ENCODE measurements at regions of chr22 and their contacts with region 1.

Region 1: GRCh38 chr22:38317122-38317994 is at the start of gene CSNK1E:
- DNase-seq: peak; percentile 93
- ATAC-seq: peak; percentile 71
- total RNA-seq, gene CSNK1E: 55.4 TPM

Region 2: GRCh38 chr22:38030311-38031133 is 286.8 kb before region 1 on chr22:
- intact Hi-C with region 1: no loop called
- DNase-seq: peak; percentile 46
- ATAC-seq: no peak

Region 3: DNA sequence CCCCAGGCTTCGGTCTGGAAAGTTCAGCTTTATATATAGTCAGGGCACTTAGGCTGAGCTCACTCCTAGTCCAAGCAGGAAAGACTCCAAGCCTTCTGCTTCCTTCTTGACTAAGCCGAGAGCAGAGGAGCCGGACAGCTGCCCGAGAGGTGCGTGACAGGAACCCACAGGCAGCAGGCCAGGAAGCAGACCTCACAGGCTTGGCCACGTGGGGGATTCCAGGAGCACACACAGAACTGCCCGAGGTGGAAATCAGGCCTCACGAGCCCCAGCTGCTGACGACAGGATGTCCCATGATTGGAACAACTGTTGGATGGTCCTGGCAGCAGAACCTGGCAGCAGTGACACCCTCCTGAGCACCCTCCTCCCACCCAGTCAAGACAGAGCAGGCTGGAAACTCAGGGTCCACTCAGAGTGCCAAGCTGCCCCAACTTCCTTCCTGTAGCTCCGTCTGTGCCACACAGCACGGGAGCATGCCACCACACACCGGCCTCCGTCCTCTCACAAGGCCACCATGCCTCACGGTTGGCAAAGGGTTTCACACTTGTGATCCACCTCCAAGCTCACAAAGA is 141.1 kb before region 1 on chr22:
- intact Hi-C with region 1: loop called (anchors 5 kb)
- DNase-seq: peak; percentile 86
- ATAC-seq: peak; percentile 66

Region 4: DNA sequence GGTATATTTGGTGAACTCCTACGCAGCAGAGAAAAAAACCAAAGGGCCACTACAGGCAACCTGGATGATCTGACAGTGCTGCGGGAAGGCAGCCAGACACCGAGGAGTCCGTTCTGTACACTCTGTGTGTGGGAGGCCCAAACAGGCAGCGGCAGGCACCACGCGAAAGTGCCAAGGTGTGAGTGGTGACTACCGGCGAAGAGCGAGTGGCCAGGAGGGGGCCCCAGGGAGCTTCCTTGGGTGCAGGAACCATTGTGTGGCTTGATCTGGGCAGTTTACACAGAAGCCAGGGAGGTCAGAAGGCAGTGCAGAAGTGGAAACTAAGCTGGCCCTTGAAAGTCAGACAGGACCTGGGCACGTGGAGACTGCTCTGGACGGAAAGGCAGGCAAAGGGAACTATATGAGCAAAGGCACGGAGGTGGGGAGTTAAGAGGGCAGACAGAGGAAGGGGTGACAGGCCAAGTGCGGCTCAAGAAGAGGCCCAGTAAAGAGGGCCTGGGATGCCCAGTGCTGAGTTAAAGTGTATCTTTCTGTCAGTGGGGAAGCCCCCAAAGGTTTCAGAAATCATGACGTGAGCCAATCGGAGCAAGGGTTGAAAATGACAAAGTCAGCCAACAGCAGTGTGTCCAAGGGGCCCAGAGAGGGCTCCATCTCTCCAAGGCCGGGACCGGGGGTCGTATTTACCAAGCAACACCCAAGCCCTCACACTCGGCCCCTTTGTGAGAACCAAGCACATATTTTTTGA is 55.1 kb before region 1 on chr22:
- intact Hi-C with region 1: loop called (anchors 1 kb)
- DNase-seq: peak; percentile 75
- ATAC-seq: peak; percentile 45

Measured in Right ventricle myocardium inferior (tissue), 1 donor.